ENCODE measurements at regions of chr14 and their contacts with region 1.

Region 1: GRCh38 chr14:75293920-75294642 is 15.5 kb downstream of the FOS start:
- DNase-seq: peak; percentile 97 to 98
- ATAC-seq: peak; percentile 90 to 96
- H3K4me3 ChIP-seq: peak overlapping the region; percentile 69
- H3K27ac ChIP-seq: peak overlapping the region; percentile 89 to 90
- H3K4me1 ChIP-seq: peaks cover 18% of the 10 kb centered on the region
- CTCF ChIP-seq: no peak
- EP300 ChIP-seq: no peak
- POLR2A ChIP-seq: peak; percentile 51
- RAD21 ChIP-seq: no peak

Region 2: DNA sequence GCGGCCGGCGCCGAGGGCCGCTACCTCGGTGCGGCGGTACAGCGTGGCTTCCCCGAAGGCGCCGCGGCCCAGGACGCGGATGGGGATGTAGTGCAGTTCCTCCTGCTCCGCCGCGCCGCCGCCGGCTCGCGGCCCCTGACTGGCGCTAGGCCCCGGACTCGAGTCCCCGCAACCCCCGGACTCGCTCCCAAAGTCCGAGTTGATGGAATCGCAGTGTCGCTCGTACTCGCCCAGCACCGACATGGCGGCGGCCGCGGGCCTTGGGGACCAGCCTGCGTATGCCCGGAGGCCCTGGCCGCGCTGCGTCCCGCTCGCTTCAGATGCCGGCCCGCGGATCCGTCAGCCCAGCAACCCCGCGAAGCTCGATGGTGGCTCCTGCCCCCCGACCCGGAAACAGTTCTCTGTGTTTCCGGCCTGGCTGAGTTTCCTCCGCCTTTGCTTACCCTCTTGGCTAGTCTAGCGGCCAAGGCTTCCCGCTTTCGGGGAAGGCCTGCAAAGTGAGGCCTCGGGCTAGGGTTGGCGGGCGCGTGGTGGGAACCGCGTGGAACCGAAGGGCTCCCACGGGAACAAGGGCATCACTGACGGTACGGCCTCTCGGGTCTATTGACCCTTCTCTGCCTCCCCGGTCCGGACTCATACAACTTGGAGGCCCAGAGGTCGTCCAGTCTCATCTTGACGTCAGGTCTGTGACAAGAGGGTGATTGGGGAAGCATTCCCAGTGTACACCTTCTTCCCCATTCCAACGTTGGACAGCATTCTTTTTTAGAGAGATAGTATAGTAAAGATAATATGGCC is 167.2 kb before region 1 on chr14 and contains the start of gene NEK9:
- CTCF ChIA-PET with region 1: interaction called, 250 read pairs
- POLR2A ChIA-PET with region 1: interaction called, 19 read pairs
- DNase-seq: peak; percentile 91 to 92
- ATAC-seq: peak; percentile 95 to 98
- H3K4me3 ChIP-seq: peak within 1 kb of the TSS; percentile 83
- H3K27ac ChIP-seq: peak within 1 kb of the TSS; percentile 93 to 95
- H3K4me1 ChIP-seq: peaks cover 35% of the 10 kb centered on the region
- CTCF ChIP-seq: no peak
- EP300 ChIP-seq: no peak
- POLR2A ChIP-seq: peak; percentile 79
- RAD21 ChIP-seq: no peak
- polyA plus RNA-seq, gene NEK9: 75.9 and 79.7 TPM in 2 replicates

Region 3: GRCh38 chr14:75147423-75148071 is 146.5 kb before region 1 on chr14:
- CTCF ChIA-PET with region 1: interaction called, 224 read pairs
- POLR2A ChIA-PET with region 1: interaction called, 3 read pairs
- DNase-seq: peak in 1 of 2 experiments; percentile 31
- ATAC-seq: peak in 1 of 2 experiments; percentile 82; a peak in 4 of 6 replicates
- H3K4me3 ChIP-seq: no peak overlapping the region
- H3K27ac ChIP-seq: peak overlapping the region in 1 of 2 experiments; percentile 15; a peak in 1 of 6 replicates
- H3K4me1 ChIP-seq: peaks cover 9% of the 10 kb centered on the region; the same call in 1 of the 3 replicates
- CTCF ChIP-seq: no peak
- EP300 ChIP-seq: no peak
- POLR2A ChIP-seq: no peak
- RAD21 ChIP-seq: no peak

Region 4: DNA sequence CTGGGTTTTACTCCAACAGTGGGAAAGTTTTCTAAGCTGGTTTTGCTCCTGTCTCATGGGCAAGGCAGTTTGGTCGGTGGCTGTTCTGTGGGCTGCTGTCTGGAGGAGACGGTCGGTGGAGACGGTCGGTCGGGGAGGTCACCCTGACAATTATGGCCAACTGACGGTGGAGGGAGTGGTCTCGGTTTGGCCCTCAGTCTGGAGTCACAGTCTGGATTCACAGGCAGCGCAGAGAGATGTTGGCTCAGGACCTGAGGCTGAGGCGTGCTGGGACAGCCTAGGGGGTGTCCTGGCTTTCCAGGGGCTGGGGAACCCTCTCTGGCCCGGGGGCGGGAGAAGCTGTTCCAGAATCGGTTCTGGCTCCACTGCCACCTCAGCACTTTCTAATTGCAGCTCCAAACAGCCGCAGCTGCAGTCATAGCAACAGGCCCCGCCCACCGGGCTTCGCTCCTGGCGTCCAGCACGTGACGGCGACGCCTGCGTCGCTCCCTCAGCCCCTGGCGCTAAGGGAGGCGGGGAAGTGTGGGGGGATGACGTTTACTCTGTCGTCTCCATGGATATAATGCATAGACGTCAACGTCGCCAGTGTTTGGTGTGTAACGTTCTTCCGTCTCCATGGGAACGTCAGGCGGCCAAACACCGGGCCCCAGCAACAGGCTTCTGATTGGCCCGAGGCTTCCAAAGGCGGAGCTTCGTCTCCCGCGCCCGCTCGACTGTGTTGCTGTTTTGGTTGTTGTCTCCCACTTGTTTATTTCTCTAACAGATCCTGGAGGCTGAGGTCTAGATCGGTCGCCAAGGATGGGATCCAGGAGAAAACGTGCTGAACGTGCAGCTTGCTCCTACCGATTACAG is 35.2 kb before region 1 on chr14:
- CTCF ChIA-PET with region 1: interaction called, 6 read pairs
- POLR2A ChIA-PET with region 1: interaction called, 11 read pairs
- DNase-seq: peak; percentile 98 to 99
- ATAC-seq: peak; percentile 91 to 97
- H3K4me3 ChIP-seq: peak overlapping the region; percentile 37
- H3K27ac ChIP-seq: peak overlapping the region; percentile 83 to 88
- H3K4me1 ChIP-seq: peaks cover 27% of the 10 kb centered on the region
- CTCF ChIP-seq: no peak
- EP300 ChIP-seq: no peak
- POLR2A ChIP-seq: no peak
- RAD21 ChIP-seq: no peak; a peak in 1 of 5 replicates

Region 5: DNA sequence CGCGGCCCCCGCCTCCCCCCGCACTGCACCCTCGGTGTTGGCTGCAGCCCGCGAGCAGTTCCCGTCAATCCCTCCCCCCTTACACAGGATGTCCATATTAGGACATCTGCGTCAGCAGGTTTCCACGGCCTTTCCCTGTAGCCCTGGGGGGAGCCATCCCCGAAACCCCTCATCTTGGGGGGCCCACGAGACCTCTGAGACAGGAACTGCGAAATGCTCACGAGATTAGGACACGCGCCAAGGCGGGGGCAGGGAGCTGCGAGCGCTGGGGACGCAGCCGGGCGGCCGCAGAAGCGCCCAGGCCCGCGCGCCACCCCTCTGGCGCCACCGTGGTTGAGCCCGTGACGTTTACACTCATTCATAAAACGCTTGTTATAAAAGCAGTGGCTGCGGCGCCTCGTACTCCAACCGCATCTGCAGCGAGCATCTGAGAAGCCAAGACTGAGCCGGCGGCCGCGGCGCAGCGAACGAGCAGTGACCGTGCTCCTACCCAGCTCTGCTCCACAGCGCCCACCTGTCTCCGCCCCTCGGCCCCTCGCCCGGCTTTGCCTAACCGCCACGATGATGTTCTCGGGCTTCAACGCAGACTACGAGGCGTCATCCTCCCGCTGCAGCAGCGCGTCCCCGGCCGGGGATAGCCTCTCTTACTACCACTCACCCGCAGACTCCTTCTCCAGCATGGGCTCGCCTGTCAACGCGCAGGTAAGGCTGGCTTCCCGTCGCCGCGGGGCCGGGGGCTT is 15.5 kb before region 1 on chr14 and contains the start of gene FOS:
- CTCF ChIA-PET with region 1: interaction called, 10 read pairs
- POLR2A ChIA-PET with region 1: interaction called, 18 read pairs
- DNase-seq: peak; percentile 96 to 98
- ATAC-seq: peak; percentile 70
- H3K4me3 ChIP-seq: peak within 1 kb of the TSS; percentile 65
- H3K27ac ChIP-seq: peak within 1 kb of the TSS; percentile 85 to 97
- H3K4me1 ChIP-seq: peaks cover 28% of the 10 kb centered on the region
- CTCF ChIP-seq: no peak
- EP300 ChIP-seq: no peak
- POLR2A ChIP-seq: peak; percentile 100
- RAD21 ChIP-seq: peak in 1 of 2 experiments; percentile 6; a peak in 2 of 5 replicates
- polyA plus RNA-seq, gene FOS: 197 and 256 TPM in 2 replicates

Region 6: GRCh38 chr14:75283882-75284563 is 10.1 kb before region 1 on chr14:
- CTCF ChIA-PET with region 1: interaction called, 16 read pairs
- POLR2A ChIA-PET with region 1: interaction called, 17 read pairs
- DNase-seq: peak in 1 of 2 experiments; percentile 77
- ATAC-seq: peak; percentile 49 to 63
- H3K4me3 ChIP-seq: no peak overlapping the region
- H3K27ac ChIP-seq: peak overlapping the region; percentile 68 to 81
- H3K4me1 ChIP-seq: peaks cover 35% of the 10 kb centered on the region
- CTCF ChIP-seq: no peak
- EP300 ChIP-seq: no peak
- POLR2A ChIP-seq: no peak
- RAD21 ChIP-seq: no peak

Region 7: DNA sequence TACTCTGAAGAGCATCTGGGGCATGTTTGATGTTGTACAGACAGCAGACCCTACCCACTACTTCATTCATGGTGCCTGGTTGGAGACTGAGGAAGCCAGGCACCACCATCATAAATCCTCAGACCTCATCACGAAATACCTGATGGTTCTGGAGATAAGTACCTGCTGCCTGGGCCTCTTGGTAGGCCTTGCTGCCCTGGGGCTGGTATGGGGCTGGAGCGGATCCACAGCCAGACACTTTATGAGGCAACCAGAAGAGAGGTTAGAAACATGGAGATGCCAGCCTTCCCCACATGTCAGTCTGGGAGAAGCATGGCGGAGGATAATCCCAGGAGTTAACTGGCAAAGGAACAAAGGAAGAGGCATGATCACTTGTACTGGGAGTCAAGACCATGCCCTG is 54.3 kb after region 1 on chr14:
- CTCF ChIA-PET with region 1: no interaction called
- POLR2A ChIA-PET with region 1: no interaction called
- DNase-seq: no peak
- ATAC-seq: no peak
- H3K4me3 ChIP-seq: no peak overlapping the region
- H3K27ac ChIP-seq: no peak overlapping the region
- H3K4me1 ChIP-seq: no peaks in the 10 kb centered on the region
- CTCF ChIP-seq: no peak
- EP300 ChIP-seq: no peak
- POLR2A ChIP-seq: no peak
- RAD21 ChIP-seq: no peak

Measured in A549 (cell line).